T-cell (primary cell): ENCODE measurements at regions of chr15 and their contacts with region 1.

Region 1: GRCh38 chr15:71743861-71744382 is 66.4 kb upstream of the NR2E3 start:
- DNase-seq: peak in 32 of 35 experiments; percentile 9 to 74 (median 47)
- ATAC-seq: no peak
- H3K4me3 ChIP-seq: no peak overlapping the region
- H3K4me3 Mint-ChIP-seq: no peak overlapping the region
- H3K27ac ChIP-seq: no peak overlapping the region
- H3K27ac Mint-ChIP-seq: no peak overlapping the region
- H3K4me1 ChIP-seq: no peaks in the 10 kb centered on the region
- H3K4me1 Mint-ChIP-seq: peaks cover 0 to 2% (median 0%) of the 10 kb centered on the region in 3 donors
- H3K27me3 ChIP-seq: peaks cover 3 to 9% of the 10 kb centered on the region in 2 experiments
- H3K27me3 Mint-ChIP-seq: peaks cover 2 to 34% of the 10 kb centered on the region in 2 donors

Region 2: GRCh38 chr15:70664494-70664893 is 1079.4 kb before region 1 on chr15:
- CTCF ChIA-PET with region 1: no interaction called
- POLR2A ChIA-PET with region 1: no interaction called
- DNase-seq: no peak
- ATAC-seq: no peak
- H3K4me3 ChIP-seq: no peak overlapping the region
- H3K4me3 Mint-ChIP-seq: no peak overlapping the region
- H3K27ac ChIP-seq: no peak overlapping the region
- H3K27ac Mint-ChIP-seq: no peak overlapping the region
- H3K4me1 ChIP-seq: peaks cover 0 to 5% of the 10 kb centered on the region in 2 experiments
- H3K4me1 Mint-ChIP-seq: peaks cover 0 to 11% (median 2%) of the 10 kb centered on the region in 3 donors
- H3K27me3 ChIP-seq: no peaks in the 10 kb centered on the region
- H3K27me3 Mint-ChIP-seq: peaks cover 2 to 3% of the 10 kb centered on the region in 2 donors

Region 3: GRCh38 chr15:72155635-72156616 is 412.0 kb after region 1 on chr15:
- CTCF ChIA-PET with region 1: interaction called, 16 to 58 read pairs
- POLR2A ChIA-PET with region 1: no interaction called
- DNase-seq: peak; percentile 51 to 85 (median 74)
- ATAC-seq: peak; percentile 79 to 86 (median 84)
- H3K4me3 ChIP-seq: peak overlapping the region; percentile 20 to 62
- H3K4me3 Mint-ChIP-seq: peak overlapping the region; percentile 60 to 80 (median 75)
- H3K27ac ChIP-seq: no peak overlapping the region
- H3K27ac Mint-ChIP-seq: no peak overlapping the region
- H3K4me1 ChIP-seq: peaks cover 0 to 6% of the 10 kb centered on the region in 2 experiments
- H3K4me1 Mint-ChIP-seq: peaks cover 4 to 8% (median 6%) of the 10 kb centered on the region in 3 donors
- H3K27me3 ChIP-seq: peaks cover 0 to 13% of the 10 kb centered on the region in 2 experiments
- H3K27me3 Mint-ChIP-seq: peaks cover 0 to 4% of the 10 kb centered on the region in 2 donors

Region 4: DNA sequence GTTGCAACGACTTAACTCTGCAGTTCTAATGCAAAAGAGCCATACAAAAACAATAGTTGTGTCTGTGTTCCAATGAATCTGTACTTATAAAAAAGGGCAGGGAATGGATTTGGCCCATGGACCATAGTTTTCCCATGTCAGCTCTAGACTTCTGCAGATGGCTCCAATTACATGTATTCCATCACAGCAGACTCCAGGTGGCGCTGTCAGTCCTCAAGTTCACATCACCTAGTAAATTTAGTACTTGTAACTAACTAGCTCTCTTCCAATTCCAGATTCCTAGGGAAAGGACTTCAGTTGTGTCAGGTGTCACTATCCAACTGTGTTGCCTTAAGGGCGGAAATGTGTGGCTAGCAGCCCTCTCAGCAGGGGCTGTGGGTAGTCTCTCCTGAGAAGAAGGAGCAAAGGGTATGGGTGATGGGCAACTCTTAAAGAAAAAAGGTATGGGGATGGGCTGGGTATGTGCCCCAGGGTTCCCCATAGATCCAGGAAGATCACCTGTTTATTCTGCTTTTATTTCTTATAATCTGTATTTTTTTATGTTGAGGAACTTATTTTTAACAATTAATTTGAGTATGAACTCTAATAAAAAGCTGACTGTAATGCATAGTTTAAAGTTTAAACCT is 978.3 kb after region 1 on chr15:
- CTCF ChIA-PET with region 1: interaction called in 1 of 2 experiments, 13 read pairs
- POLR2A ChIA-PET with region 1: no interaction called
- DNase-seq: peak; percentile 28 to 78 (median 59)
- ATAC-seq: peak in 1 of 4 experiments; percentile 42
- H3K4me3 ChIP-seq: no peak overlapping the region
- H3K4me3 Mint-ChIP-seq: no peak overlapping the region
- H3K27ac ChIP-seq: no peak overlapping the region
- H3K27ac Mint-ChIP-seq: no peak overlapping the region
- H3K4me1 ChIP-seq: no peaks in the 10 kb centered on the region
- H3K4me1 Mint-ChIP-seq: peaks cover 0 to 3% (median 0%) of the 10 kb centered on the region in 3 donors
- H3K27me3 ChIP-seq: no peaks in the 10 kb centered on the region
- H3K27me3 Mint-ChIP-seq: no peaks in the 10 kb centered on the region

Region 5: GRCh38 chr15:72774696-72775383 is 1030.9 kb after region 1 on chr15:
- CTCF ChIA-PET with region 1: no interaction called
- POLR2A ChIA-PET with region 1: no interaction called
- DNase-seq: no peak
- ATAC-seq: no peak
- H3K4me3 ChIP-seq: no peak overlapping the region
- H3K4me3 Mint-ChIP-seq: no peak overlapping the region
- H3K27ac ChIP-seq: no peak overlapping the region
- H3K27ac Mint-ChIP-seq: peak overlapping the region; percentile 30 to 50
- H3K4me1 ChIP-seq: peaks cover 0 to 3% of the 10 kb centered on the region in 2 experiments
- H3K4me1 Mint-ChIP-seq: peaks cover 47 to 52% (median 48%) of the 10 kb centered on the region in 3 donors
- H3K27me3 ChIP-seq: no peaks in the 10 kb centered on the region
- H3K27me3 Mint-ChIP-seq: no peaks in the 10 kb centered on the region